ENCODE measurements at regions of chr1 and their contacts with region 1.

Region 1: GRCh38 chr1:232613752-232614381 is 16.1 kb downstream of the SIPA1L2 start:
- DNase-seq: no peak
- H3K4me3 ChIP-seq: no peak overlapping the region
- H3K27ac ChIP-seq: no peak overlapping the region
- H3K4me1 ChIP-seq: no peaks in the 10 kb centered on the region
- H3K27me3 ChIP-seq: no peaks in the 10 kb centered on the region
- CTCF ChIP-seq: no peak

Region 2: GRCh38 chr1:232450615-232451014 is 163.3 kb before region 1 on chr1:
- intact Hi-C with region 1: no loop called
- DNase-seq: no peak
- H3K4me3 ChIP-seq: no peak overlapping the region
- H3K27ac ChIP-seq: no peak overlapping the region
- H3K4me1 ChIP-seq: no peaks in the 10 kb centered on the region
- H3K27me3 ChIP-seq: no peaks in the 10 kb centered on the region
- CTCF ChIP-seq: no peak

Region 3: DNA sequence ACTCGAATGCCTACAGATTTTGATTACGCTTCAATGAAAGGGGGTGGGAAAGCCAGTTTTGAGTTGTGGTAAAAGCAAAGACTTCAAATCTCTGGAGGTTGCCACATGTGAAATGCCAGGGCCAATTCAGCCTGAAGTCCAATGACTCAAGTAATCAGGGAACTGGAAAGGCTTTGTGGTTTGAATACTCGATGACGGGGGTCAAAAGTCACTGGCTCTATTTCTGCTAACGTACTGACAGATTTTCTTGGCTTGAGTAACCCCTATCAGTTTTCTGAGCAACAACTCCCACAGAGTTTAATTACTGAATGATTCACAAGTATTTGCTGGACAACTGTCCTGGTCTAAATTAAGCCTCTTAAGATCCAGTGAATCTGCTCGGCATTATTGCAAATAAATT is 136.1 kb before region 1 on chr1:
- intact Hi-C with region 1: loop called (anchors 10 kb)
- DNase-seq: no peak
- H3K4me3 ChIP-seq: no peak overlapping the region
- H3K27ac ChIP-seq: no peak overlapping the region
- H3K4me1 ChIP-seq: no peaks in the 10 kb centered on the region
- H3K27me3 ChIP-seq: no peaks in the 10 kb centered on the region
- CTCF ChIP-seq: no peak

Region 4: GRCh38 chr1:232751393-232752140 is 137.7 kb after region 1 on chr1:
- intact Hi-C with region 1: no loop called
- DNase-seq: no peak
- H3K4me3 ChIP-seq: no peak overlapping the region
- H3K27ac ChIP-seq: no peak overlapping the region
- H3K4me1 ChIP-seq: no peaks in the 10 kb centered on the region
- H3K27me3 ChIP-seq: no peaks in the 10 kb centered on the region
- CTCF ChIP-seq: no peak